ENCODE measurements at regions of chr22 and their contacts with region 1.

Region 1: GRCh38 chr22:20031732-20032406 is 11.0 kb downstream of the TANGO2 start:
- DNase-seq: peak in 1 of 2 donors; percentile 89
- H3K4me3 ChIP-seq: no peak overlapping the region
- CTCF ChIP-seq: no peak
- POLR2A ChIP-seq: no peak

Region 2: DNA sequence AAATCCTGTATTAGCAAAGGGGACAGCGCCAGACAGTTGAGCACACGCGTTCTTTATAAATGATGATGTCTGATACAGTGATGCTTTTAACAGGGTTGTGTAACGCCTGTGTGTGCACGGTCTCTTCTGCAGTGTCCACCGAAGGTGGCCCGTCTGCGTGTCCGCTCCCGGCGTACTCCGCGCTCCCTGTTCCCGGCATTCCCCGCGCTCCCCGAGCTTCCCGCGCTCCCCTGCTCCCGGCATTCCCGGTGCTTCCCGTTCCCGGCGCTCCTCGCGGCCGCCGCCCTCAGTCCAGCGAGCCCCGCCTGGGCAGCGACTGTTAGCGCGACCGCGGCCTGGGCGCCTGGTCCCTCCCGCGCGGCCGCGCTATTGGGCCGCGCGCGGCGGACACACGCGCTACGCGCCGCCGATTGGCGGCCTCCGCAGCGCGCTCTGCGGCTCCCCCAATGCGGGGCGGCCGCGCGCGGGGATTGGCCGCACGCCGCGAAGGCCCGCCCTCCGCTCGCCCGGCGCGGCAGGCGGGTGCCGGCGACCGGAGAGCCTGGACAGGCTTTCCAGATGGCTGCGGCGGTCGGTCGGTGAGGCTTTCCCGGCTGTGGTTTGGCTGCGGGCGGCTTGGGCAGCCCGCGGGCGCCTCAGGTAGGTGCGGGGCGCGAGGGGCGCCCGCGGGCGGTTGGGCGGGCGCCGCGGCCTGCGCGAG is 48.0 kb after region 1 on chr22 and contains the start of gene DGCR8:
- intact Hi-C with region 1: no loop called
- DNase-seq: peak; percentile 88 to 98
- H3K4me3 ChIP-seq: peak within 1 kb of the TSS; percentile 79
- CTCF ChIP-seq: no peak
- POLR2A ChIP-seq: no peak
- total RNA-seq, gene DGCR8: 14.8 to 28.2 (median 21.8) TPM

Region 3: DNA sequence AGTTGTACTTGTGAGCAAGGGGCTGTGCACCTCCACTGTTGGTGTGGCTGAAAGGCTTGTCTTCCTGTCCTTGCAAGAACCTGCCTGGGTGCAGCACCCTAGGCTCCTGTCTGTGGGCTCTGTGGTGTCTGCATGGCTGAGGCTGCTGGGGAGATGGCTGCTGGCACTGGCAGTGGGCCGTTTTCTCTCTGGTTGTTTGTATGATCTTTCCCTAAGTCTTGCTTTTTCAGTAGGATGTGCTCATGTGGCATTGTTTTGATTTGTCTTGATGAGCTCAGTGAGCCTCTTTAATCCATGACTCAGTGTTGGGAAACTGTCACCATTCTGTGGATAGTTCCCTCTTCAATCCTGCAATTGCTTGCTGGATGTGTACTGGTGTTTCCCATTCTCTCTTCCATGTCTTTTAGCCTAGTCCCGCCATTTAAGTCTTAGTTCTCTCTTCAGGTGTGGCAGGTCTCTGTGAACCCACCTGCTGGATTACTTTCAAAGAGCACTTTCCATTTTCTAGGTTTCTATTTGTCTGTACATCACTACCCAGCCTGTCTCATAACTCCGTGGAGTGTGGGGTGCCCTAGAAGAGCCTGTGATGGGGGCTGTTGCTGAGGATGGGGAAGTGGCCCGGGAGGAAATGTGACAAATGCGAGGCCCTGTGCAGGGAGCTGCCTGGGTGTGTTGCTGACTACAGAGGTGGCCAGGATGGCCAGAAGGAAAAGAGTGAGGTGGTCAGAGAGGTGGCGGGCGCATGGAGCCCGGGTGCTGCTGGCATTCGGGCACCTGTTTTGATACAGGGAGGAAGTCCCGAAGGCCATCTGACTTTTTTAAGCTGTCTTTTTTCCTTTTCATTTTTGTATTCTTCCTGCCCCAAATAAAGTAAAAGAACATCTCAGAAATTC is 58.7 kb after region 1 on chr22:
- intact Hi-C with region 1: loop called (anchors 10 kb)
- DNase-seq: no peak
- H3K4me3 ChIP-seq: no peak overlapping the region
- CTCF ChIP-seq: no peak
- POLR2A ChIP-seq: no peak